ENCODE measurements at regions of chr13 and their contacts with region 1.

Region 1: DNA sequence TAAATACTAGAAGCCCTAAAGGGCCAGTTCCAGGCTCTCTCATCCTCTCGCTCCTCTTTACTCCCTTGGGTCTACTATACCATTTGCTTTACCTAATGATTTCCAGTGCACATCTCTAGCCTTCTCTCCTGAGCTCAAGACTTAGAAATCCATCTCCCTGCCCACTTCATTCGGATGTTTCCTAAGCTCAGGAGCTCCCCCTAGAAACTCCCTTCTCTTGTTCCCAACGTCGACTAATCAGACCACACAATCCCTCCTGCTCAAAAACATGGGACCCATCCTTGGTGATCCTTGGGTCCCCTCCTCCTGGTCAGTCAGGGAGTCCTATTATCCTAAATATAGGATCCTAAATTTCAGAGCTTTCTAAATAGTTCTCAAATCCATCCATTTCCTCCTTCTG is 21.1 kb upstream of the STK24 start:
- DNase-seq: no peak
- ATAC-seq: no peak
- H3K4me3 ChIP-seq: no peak overlapping the region
- H3K27ac ChIP-seq: no peak overlapping the region
- H3K4me1 ChIP-seq: peaks cover 0 to 4% (median 0%) of the 10 kb centered on the region in 9 donors
- H3K27me3 ChIP-seq: peaks cover 0 to 9% (median 0%) of the 10 kb centered on the region in 7 donors
- CTCF ChIP-seq: peak in 6 of 9 donors; percentile 17 to 39 (median 29)

Region 2: GRCh38 chr13:98632961-98633360 is 34.9 kb after region 1 on chr13:
- intact Hi-C with region 1: loop called in 1 of 10 experiments (anchors 5 kb)
- DNase-seq: no peak
- ATAC-seq: no peak
- H3K4me3 ChIP-seq: no peak overlapping the region
- H3K27ac ChIP-seq: peak overlapping the region in 1 of 10 donors; percentile 41
- H3K4me1 ChIP-seq: peaks cover 0 to 8% (median 0%) of the 10 kb centered on the region in 9 donors
- H3K27me3 ChIP-seq: no peaks in the 10 kb centered on the region
- CTCF ChIP-seq: no peak

Region 3: DNA sequence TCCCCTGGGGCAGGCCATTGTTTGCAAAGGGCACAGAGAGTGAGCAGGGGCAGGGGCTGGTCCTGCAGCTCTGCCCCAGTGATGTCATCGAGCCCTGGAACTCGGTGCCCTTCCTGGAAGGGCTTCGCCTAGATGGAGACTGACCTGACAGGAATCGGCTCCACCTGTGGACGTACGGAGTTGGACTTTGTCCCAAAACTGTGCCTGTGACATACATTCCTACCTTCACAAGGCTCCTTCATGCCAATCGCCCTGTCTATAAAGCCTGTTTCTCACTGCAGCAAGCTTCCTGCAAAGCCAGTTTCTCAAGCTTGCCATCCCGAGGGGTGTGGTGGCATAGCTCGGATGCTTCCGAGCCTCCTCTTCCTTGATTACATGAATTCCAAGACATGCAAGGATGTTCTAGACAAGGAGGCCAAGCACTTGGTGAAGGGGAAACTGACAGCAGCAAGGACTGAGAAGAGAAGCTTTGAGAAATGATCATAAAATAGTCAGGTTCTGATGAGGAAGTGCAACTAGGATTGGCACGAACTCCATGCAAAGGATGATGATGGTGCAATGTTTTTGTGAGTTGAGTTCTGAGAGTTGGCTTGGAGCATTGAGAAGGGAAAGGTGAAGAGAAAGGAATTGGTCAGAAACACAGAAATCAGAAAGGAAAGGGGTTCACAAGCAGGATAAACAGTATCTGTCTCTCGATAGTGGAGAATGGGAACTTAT is 52.5 kb after region 1 on chr13:
- intact Hi-C with region 1: no loop called
- DNase-seq: no peak
- ATAC-seq: no peak
- H3K4me3 ChIP-seq: no peak overlapping the region
- H3K27ac ChIP-seq: no peak overlapping the region
- H3K4me1 ChIP-seq: peaks cover 0 to 12% (median 0%) of the 10 kb centered on the region in 9 donors
- H3K27me3 ChIP-seq: peaks cover 0 to 3% (median 0%) of the 10 kb centered on the region in 7 donors
- CTCF ChIP-seq: no peak